GM12878 (cell line): ENCODE measurements at regions of chr10 and their contacts with region 1.

Region 1: DNA sequence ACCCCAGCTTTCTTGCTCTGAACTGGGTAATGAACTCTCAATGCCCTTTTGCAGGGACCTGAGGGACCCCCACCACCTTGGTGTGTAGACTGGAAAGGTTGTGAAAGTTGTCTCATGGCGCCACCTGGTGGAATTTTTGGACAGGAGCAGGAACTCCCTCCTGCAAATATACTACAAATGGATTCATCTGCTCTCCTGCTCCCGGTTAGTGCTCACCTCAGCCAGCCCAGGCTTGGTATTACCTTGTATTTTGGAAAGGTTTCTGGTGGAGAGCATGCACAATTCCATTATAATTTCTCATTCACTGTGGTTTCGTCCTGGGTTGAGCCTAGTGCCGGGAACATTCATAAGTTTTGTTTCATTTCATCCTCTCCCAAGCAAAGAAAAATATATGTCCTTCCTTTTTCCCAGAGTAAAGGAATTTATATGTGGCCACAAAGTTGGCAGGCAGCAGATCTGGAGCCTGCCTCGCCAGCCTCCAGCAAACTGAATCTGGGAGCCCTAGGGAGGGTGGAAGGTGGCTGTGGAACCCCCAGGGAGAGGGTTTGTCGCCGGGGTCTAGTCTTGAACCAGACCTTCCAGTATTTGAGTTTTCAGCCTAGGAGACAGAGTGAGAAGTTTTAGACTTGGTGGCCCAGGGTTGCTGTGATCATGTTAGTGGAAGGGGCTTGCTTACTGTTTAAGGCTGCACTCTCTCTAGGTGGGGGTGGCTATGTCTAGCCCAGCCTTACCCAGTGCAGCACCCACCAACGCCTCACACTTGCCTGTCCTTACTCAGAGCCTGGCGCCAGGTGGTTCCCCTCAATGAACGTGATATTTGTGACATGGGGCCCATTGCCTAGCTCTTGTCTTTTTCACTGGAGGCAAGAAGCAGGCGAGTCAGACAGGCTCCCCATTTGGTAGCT is 9.5 kb downstream of the FAM241B start:
- DNase-seq: peak; percentile 11
- ATAC-seq: peak; percentile 88
- H3K4me3 ChIP-seq: no peak overlapping the region
- H3K27ac ChIP-seq: no peak overlapping the region
- H3K4me1 ChIP-seq: no peaks in the 10 kb centered on the region
- H3K27me3 ChIP-seq: no peaks in the 10 kb centered on the region; a peak in 1 of 4 replicates
- CTCF ChIP-seq: peak; percentile 70 to 72 (median 72)
- EP300 ChIP-seq: no peak
- POLR2A ChIP-seq: no peak
- RAD21 ChIP-seq: peak; percentile 75

Region 2: GRCh38 chr10:69253171-69253570 is 386.4 kb before region 1 on chr10:
- CTCF ChIA-PET with region 1: no interaction called
- POLR2A ChIA-PET with region 1: no interaction called
- RAD21 ChIA-PET with region 1: no interaction called
- SMC1A ChIA-PET with region 1: no interaction called
- in situ Hi-C with region 1: loop called (anchors 10 kb)
- intact Hi-C with region 1: no loop called
- DNase-seq: no peak
- ATAC-seq: no peak
- H3K4me3 ChIP-seq: no peak overlapping the region
- H3K27ac ChIP-seq: no peak overlapping the region
- H3K4me1 ChIP-seq: no peaks in the 10 kb centered on the region
- H3K27me3 ChIP-seq: no peaks in the 10 kb centered on the region
- CTCF ChIP-seq: no peak
- EP300 ChIP-seq: no peak
- POLR2A ChIP-seq: no peak
- RAD21 ChIP-seq: no peak

Region 3: DNA sequence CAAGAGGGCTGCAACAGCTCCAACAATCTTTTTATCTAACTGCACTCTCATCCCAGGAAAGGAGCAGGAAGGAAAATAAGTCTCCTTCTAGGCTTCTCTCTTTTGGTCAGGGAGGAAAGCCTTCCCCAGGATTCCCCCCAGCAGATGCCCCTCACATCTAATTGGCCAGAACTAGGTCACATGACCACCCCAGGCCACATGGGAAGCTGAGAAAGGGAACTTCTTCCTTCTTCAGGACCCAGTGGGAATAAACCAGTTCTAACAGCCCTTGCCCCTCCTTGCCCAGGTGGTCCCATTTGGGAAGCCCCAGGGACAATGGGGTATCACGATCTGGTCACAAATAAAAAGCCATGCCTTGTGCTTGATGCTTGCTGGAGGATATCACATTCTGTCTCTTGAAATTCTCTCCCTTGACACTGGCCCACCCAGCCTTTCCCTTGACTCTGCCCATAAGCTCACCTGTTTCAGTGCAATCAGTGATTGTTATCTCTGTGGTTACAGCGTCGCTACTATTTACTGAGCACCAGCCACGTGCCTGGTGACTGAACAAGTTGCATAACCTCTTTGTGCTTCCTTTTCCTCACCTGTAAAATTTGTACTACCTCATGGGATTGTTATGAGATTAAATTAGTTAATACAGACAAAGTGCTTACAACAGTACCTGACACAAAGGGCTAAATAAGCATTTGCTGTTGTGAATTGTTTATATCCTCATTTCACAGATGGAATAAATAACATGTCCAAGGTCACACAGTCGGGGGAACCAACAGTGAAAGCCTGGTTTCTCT is 213.8 kb before region 1 on chr10:
- CTCF ChIA-PET with region 1: no interaction called
- POLR2A ChIA-PET with region 1: no interaction called
- RAD21 ChIA-PET with region 1: no interaction called
- SMC1A ChIA-PET with region 1: interaction called, 3 read pairs
- in situ Hi-C with region 1: no loop called
- intact Hi-C with region 1: loop called (anchors 5 kb)
- DNase-seq: no peak
- ATAC-seq: peak; percentile 31
- H3K4me3 ChIP-seq: no peak overlapping the region
- H3K27ac ChIP-seq: no peak overlapping the region
- H3K4me1 ChIP-seq: peaks cover 9% of the 10 kb centered on the region; the same call in 1 of the 2 replicates
- H3K27me3 ChIP-seq: no peaks in the 10 kb centered on the region
- CTCF ChIP-seq: no peak
- EP300 ChIP-seq: no peak
- POLR2A ChIP-seq: no peak
- RAD21 ChIP-seq: no peak

Region 4: GRCh38 chr10:69515699-69516259 is 123.8 kb before region 1 on chr10:
- CTCF ChIA-PET with region 1: interaction called, 189 read pairs
- POLR2A ChIA-PET with region 1: no interaction called
- RAD21 ChIA-PET with region 1: interaction called, 59 read pairs
- SMC1A ChIA-PET with region 1: interaction called, 66 read pairs
- in situ Hi-C with region 1: loop called (anchors 5 kb)
- intact Hi-C with region 1: loop called (anchors 1 kb)
- DNase-seq: peak; percentile 16
- ATAC-seq: peak; percentile 100
- H3K4me3 ChIP-seq: no peak overlapping the region
- H3K27ac ChIP-seq: no peak overlapping the region
- H3K4me1 ChIP-seq: no peaks in the 10 kb centered on the region
- H3K27me3 ChIP-seq: no peaks in the 10 kb centered on the region; a peak in 1 of 4 replicates
- CTCF ChIP-seq: peak; percentile 92 to 98 (median 93); a peak in 5 of 6 replicates
- EP300 ChIP-seq: no peak
- POLR2A ChIP-seq: no peak
- RAD21 ChIP-seq: peak; percentile 85

Region 5: DNA sequence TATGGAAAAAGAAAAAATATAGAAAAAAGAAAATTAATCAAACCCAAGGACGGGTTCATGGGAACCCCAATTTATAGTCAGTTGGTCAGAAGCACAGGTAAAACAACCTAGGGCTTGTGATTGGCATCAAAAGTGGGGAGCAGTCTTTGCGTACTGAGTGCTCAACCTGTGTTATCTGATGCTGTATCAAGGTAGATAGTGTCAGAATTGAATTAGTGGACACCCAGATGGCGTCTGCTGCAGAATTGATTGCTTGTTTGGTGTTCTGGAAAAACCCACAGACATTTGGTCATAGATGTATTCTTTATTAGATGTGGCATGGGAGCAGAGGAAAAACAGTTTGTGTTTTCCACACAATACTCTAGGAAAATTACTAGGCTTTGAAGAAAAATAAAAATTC is 105.9 kb before region 1 on chr10:
- CTCF ChIA-PET with region 1: interaction called, 5 read pairs
- POLR2A ChIA-PET with region 1: no interaction called
- RAD21 ChIA-PET with region 1: no interaction called
- SMC1A ChIA-PET with region 1: no interaction called
- in situ Hi-C with region 1: no loop called
- intact Hi-C with region 1: loop called (anchors 5 kb)
- DNase-seq: no peak
- ATAC-seq: no peak
- H3K4me3 ChIP-seq: no peak overlapping the region
- H3K27ac ChIP-seq: no peak overlapping the region
- H3K4me1 ChIP-seq: no peaks in the 10 kb centered on the region
- H3K27me3 ChIP-seq: no peaks in the 10 kb centered on the region; a peak in 1 of 4 replicates
- CTCF ChIP-seq: no peak
- EP300 ChIP-seq: no peak
- POLR2A ChIP-seq: no peak
- RAD21 ChIP-seq: no peak

Region 6: DNA sequence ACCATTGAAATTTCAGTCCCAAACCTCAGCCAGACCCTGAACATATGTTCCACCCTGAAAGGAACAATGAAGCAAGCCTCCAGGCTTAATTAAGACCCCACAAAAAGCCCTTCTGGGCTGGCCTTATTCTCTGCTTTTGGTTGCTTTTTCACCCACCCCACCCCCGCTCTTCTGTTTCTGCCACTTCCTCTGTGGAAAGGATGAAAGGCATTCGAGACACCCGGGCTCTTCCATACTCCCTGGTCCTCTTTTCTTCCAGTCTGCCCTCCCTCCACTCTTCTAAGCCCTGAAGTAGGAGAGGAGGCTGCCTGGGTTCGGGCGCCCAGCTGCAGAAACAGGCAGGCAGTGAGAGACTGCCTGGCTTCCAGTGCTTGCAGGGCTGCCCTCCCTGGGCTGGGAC is 18.9 kb before region 1 on chr10:
- CTCF ChIA-PET with region 1: no interaction called
- POLR2A ChIA-PET with region 1: no interaction called
- RAD21 ChIA-PET with region 1: no interaction called
- SMC1A ChIA-PET with region 1: no interaction called
- in situ Hi-C with region 1: no loop called
- intact Hi-C with region 1: no loop called
- DNase-seq: no peak
- ATAC-seq: no peak
- H3K4me3 ChIP-seq: no peak overlapping the region
- H3K27ac ChIP-seq: no peak overlapping the region
- H3K4me1 ChIP-seq: no peaks in the 10 kb centered on the region
- H3K27me3 ChIP-seq: no peaks in the 10 kb centered on the region
- CTCF ChIP-seq: no peak
- EP300 ChIP-seq: no peak
- POLR2A ChIP-seq: no peak
- RAD21 ChIP-seq: no peak

Region 7: DNA sequence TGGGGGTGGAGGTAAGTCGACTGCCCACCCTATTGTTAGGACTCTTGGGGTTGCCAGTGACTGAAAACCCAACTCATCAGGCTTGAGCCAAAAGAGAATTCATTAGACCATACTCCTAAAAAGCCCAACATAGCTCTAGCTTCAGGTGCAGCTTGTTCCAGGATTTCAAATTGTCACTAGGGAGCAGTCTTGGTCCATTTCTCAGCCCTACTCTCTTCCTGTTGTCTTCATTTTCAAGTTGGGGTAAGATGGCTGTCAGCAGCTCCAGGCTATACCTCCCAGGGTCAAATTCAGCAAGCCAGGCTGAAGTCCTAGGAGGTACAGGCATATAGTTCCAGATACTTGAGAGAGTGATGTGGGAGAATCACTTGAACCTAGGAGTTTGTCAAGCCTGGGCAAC is 147.2 kb after region 1 on chr10:
- CTCF ChIA-PET with region 1: no interaction called
- POLR2A ChIA-PET with region 1: no interaction called
- RAD21 ChIA-PET with region 1: no interaction called
- SMC1A ChIA-PET with region 1: no interaction called
- in situ Hi-C with region 1: no loop called
- intact Hi-C with region 1: no loop called
- DNase-seq: no peak
- ATAC-seq: no peak
- H3K4me3 ChIP-seq: no peak overlapping the region
- H3K27ac ChIP-seq: no peak overlapping the region
- H3K4me1 ChIP-seq: no peaks in the 10 kb centered on the region
- H3K27me3 ChIP-seq: peaks cover 0 to 1% of the 10 kb centered on the region in 2 experiments; a peak in 2 of 4 replicates
- CTCF ChIP-seq: peak in 2 of 3 experiments; percentile 9 to 16; a peak in 2 of 6 replicates
- EP300 ChIP-seq: no peak
- POLR2A ChIP-seq: no peak
- RAD21 ChIP-seq: peak; percentile 19; the same call in 1 of the 2 replicates